AG04449 (cell line): ENCODE measurements at regions of chr11 and their contacts with region 1.

Region 1: DNA sequence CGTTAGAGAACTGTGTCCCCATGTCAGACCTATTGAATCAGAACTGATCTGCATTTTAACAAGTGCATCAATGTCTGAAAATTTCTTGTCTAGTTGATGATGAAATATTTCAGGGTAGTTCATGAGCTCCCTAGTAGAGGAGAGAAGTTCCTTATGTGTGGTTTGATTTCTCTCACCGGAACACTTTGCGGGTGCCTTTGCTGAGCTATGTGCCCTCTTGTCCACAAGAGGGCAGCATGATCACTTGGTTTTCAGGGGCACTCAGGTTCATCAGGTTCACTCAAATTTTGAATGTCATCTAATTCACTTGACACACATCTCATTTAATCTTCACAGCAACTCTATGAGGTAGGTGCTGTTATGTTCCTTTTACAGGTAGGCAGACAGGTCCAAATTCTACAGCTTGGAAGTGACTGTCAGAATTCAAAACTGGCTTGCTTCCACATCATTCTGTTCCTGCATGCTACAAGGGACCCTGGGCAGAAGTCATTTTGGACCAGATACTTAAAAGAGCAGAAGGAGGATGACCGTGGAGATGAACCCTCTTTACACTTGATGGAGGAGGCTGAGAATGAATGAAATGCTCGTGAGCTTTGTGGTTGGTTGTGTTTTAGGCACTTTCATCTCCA is 55.6 kb downstream of the P4HA3 start:
- DNase-seq: no peak
- H3K4me3 ChIP-seq: no peak overlapping the region
- CTCF ChIP-seq: peak; percentile 79

Region 2: GRCh38 chr11:74237541-74237940 is 18.3 kb before region 1 on chr11:
- CTCF ChIA-PET with region 1: interaction called, 14 read pairs
- POLR2A ChIA-PET with region 1: no interaction called
- DNase-seq: no peak
- H3K4me3 ChIP-seq: no peak overlapping the region
- CTCF ChIP-seq: no peak

Region 3: DNA sequence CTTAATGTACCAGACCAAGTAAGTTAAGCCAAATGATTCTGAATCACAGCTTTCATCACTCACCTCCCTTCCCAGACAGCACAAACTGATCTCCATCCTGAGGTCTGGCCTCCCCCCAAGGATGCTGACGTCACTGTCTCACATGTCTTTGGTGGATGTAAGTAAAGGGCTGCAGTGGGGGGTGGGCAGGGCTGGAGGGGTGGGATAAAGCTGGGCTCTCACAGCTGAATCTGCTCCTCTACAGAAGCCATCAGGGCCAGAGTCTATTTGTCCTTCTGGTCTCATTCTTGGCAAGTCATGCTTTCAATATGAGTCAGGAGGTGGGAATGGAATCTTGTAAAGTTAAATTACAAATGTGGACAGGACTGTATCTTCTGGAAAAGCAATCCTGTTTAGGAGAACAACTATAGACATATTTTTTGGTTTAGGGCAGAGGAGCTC is 22.9 kb after region 1 on chr11:
- CTCF ChIA-PET with region 1: interaction called, 10 read pairs
- POLR2A ChIA-PET with region 1: no interaction called
- DNase-seq: peak; percentile 97
- H3K4me3 ChIP-seq: no peak overlapping the region
- CTCF ChIP-seq: no peak

Region 4: GRCh38 chr11:74388678-74389327 is 132.9 kb after region 1 on chr11:
- CTCF ChIA-PET with region 1: interaction called, 23 read pairs
- POLR2A ChIA-PET with region 1: no interaction called
- DNase-seq: no peak
- H3K4me3 ChIP-seq: no peak overlapping the region
- CTCF ChIP-seq: peak; percentile 65

Region 5: GRCh38 chr11:74570266-74571061 is 314.6 kb after region 1 on chr11:
- CTCF ChIA-PET with region 1: interaction called, 31 read pairs
- POLR2A ChIA-PET with region 1: no interaction called
- DNase-seq: no peak
- H3K4me3 ChIP-seq: no peak overlapping the region
- CTCF ChIP-seq: peak; percentile 62